Lower lobe of right lung (tissue), 2 donors: ENCODE measurements at regions of chr4 and their contacts with region 1.

Region 1: GRCh38 chr4:158172261-158173258 is at the start of gene GASK1B:
- DNase-seq: no peak
- ATAC-seq: peak in 1 of 2 donors; percentile 55
- H3K4me3 ChIP-seq: peak within 1 kb of the TSS; percentile 53
- H3K27ac ChIP-seq: peak within 1 kb of the TSS; percentile 74
- H3K4me1 ChIP-seq: peaks cover 37% of the 10 kb centered on the region
- H3K27me3 ChIP-seq: no peaks in the 10 kb centered on the region
- CTCF ChIP-seq: peak; percentile 61
- total RNA-seq, gene GASK1B: 22.7 TPM

Region 2: GRCh38 chr4:157992038-157992705 is 180.4 kb before region 1 on chr4:
- intact Hi-C with region 1: loop called (anchors 5 kb)
- DNase-seq: no peak
- ATAC-seq: peak; percentile 74 to 87
- H3K4me3 ChIP-seq: peak overlapping the region; percentile 38
- H3K27ac ChIP-seq: peak overlapping the region; percentile 66
- H3K4me1 ChIP-seq: peaks cover 6% of the 10 kb centered on the region
- H3K27me3 ChIP-seq: no peaks in the 10 kb centered on the region
- CTCF ChIP-seq: peak; percentile 71

Region 3: DNA sequence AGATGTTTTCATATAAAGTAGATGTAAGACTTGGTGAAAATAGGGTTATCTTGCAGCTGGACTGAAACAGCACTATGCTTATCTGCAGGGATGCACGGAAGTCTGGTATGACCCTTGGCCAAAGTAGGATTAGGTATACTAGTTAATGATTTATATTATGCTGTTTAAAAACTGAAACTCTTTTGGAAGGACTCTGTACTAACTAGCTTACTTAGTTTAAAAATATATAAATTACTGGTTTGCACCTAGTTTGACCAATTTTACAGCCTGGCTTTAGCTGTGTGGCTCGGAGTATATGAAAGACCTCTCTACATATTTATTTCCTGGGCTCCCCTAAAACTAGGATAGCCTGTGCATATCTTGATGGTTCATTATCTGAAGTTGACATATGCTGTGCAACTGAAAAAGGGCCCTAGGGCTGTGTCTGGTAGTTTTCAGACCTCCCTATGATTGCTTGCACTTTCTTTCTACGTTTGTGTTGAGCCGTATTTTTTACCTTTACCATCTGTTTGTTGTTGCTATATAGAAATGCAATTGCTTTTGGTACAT is 127.0 kb after region 1 on chr4:
- intact Hi-C with region 1: no loop called
- DNase-seq: no peak
- ATAC-seq: no peak
- H3K4me3 ChIP-seq: no peak overlapping the region
- H3K27ac ChIP-seq: no peak overlapping the region
- H3K4me1 ChIP-seq: no peaks in the 10 kb centered on the region
- H3K27me3 ChIP-seq: no peaks in the 10 kb centered on the region
- CTCF ChIP-seq: no peak